Endothelial cell of umbilical vein (primary cell): ENCODE measurements at regions of chr2 and their contacts with region 1.

Region 1: DNA sequence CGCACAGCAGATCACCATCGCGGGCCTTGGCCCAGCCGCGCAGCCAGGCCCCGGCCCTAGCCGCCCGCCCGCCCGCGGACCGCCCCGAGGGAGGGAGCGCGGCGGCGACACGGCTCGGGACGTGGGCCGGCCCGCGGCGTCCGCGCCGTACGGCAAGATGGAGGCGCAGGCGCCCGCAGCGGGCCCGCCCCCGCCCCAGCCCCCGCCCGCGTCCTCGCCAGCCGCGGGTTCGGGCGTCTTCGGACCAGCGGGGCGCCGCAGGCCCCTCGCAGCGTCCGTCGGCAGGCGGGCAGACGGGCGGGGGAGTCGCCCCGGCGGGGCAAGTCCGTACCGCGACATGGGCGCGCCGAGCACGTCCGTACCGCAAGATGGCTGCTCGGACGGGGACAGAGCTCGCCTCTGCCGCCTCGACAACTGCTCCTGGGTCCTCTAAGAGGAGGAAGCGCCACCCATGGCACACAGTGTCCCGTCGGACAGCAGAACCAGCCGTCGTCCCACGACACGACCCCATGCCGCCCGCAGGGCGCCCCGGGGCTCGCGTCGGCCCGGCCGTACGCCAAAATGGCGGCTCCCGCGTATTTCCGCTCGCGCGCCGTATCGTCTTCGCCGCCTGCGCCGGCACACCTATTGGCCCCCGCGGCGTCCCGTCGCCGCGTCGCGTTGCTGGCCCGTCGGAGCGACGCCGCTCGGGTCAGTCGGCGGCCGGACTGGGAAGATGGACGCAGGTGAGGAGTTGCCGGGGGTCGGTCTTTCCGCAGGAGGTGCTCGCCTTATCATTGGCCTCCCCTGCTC is at the starts of genes ATG4B and THAP4:
- DNase-seq: peak; percentile 85
- H3K4me3 ChIP-seq: peak within 1 kb of the TSS; percentile 64 to 99 (median 95)
- H3K27ac ChIP-seq: peak within 1 kb of the TSS; percentile 92
- H3K4me1 ChIP-seq: peaks cover 12% of the 10 kb centered on the region
- H3K27me3 ChIP-seq: no peaks in the 10 kb centered on the region
- CTCF ChIP-seq: no peak
- POLR2A ChIP-seq: peak; percentile 76
- total RNA-seq, gene ATG4B: 83.6 and 85.6 TPM in 2 replicates
- total RNA-seq, gene THAP4: 47.4 and 49.0 TPM in 2 replicates

Region 2: DNA sequence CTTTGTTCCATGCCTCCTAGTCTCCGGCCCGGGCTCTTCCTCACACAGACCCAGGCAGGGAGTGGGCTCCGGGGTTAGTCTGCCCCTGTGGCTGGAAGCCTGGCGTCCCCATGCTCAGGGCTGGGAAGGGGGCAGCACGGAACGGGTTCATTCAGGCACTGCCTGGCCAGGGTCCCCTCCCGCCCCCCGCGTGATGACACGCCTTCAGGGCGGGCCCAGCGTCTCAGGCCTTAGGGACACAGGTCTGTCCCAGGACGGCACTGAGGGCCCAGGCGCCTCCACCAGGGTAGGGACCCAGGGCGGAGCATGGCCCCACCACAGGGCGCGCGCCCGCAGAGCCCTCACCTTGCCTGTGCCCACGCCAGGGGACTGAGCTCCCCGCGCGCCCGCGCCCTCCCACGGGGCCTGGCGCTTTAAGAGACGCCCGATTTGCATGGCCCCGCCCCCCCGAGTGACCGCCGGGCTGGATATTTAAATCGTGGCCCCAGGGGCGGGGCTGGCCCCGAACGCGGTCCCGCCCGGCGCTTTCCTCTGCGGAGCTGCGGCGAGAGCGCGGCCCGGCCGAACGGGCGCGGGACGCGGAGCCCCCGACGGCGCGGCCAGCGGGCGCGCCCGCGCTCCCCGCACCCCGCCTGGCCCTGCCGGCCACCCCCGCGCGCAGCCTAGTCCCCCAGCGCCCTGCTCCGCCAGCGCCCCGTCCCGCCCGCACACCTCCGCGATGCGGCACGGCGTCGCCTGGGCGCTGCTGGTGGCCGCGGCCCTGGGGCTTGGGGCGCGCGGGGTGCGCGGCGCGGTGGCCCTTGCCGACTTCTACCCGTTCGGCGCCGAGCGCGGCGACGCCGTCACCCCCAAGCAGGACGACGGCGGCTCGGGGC is 638.8 kb before region 1 on chr2 and contains the start of gene SNED1:
- CTCF ChIA-PET with region 1: no interaction called
- POLR2A ChIA-PET with region 1: no interaction called
- dilution Hi-C with region 1: no loop called
- intact Hi-C with region 1: loop called (anchors 5 kb)
- DNase-seq: peak; percentile 93
- H3K4me3 ChIP-seq: peak within 1 kb of the TSS; percentile 42 to 46 (median 42)
- H3K27ac ChIP-seq: peak within 1 kb of the TSS; percentile 80
- H3K4me1 ChIP-seq: peaks cover 12% of the 10 kb centered on the region
- H3K27me3 ChIP-seq: no peaks in the 10 kb centered on the region
- CTCF ChIP-seq: no peak
- POLR2A ChIP-seq: peak; percentile 68
- total RNA-seq, gene SNED1: 17.2 and 22.1 TPM in 2 replicates

Region 3: DNA sequence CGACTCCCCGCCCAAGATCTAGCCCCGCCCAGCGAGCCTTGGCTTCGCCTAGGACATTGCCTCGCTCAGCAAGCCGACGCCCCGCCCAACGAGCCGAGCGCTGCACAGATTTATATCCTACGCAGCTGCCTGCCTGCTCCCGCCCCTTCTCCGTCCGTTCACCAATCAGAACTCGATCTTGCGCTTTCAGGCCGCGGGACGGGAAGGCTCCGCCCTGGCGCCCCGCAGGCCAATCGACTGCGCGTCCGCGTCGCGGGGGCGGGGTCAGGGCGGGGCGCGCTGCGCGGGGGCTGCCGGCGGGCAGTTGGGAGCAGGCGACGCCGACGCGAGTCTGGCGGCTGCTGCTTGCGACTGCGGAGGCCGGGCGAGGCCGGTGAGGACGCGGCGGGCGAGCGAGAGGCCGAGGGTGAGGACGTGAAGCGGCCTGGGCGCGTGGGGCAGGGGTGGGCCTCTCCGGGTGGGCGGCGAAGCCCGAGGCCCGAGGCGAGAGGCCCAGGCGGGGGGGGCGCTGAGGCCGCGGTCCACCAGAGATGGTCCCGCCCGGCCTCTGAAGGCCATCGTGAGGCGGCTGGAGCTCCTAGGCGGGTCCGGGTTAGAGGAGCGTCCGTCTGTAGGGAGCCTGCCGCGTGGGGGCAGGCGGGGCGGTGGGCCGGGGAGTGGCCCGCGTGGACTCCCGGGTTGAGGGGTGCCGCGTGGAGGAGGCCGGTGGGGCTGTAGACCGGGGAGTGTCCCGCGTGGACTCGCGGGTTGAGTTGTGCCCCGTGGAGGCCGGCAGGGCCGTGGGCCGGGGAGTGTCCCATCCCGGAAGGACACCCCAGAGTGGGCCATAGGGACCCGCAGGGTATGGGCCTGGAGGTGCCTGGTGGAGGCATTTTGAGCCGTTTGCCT is 281.0 kb before region 1 on chr2 and contains the start of gene FARP2:
- CTCF ChIA-PET with region 1: interaction called, 3 read pairs
- POLR2A ChIA-PET with region 1: no interaction called
- dilution Hi-C with region 1: no loop called
- intact Hi-C with region 1: loop called (anchors 1 kb)
- DNase-seq: peak; percentile 99
- H3K4me3 ChIP-seq: peak within 1 kb of the TSS; percentile 48 to 91 (median 62)
- H3K27ac ChIP-seq: peak within 1 kb of the TSS; percentile 33
- H3K4me1 ChIP-seq: peaks cover 21% of the 10 kb centered on the region
- H3K27me3 ChIP-seq: no peaks in the 10 kb centered on the region
- CTCF ChIP-seq: no peak
- POLR2A ChIP-seq: peak; percentile 89
- total RNA-seq, gene FARP2: 40.6 and 45.3 TPM in 2 replicates

Region 4: DNA sequence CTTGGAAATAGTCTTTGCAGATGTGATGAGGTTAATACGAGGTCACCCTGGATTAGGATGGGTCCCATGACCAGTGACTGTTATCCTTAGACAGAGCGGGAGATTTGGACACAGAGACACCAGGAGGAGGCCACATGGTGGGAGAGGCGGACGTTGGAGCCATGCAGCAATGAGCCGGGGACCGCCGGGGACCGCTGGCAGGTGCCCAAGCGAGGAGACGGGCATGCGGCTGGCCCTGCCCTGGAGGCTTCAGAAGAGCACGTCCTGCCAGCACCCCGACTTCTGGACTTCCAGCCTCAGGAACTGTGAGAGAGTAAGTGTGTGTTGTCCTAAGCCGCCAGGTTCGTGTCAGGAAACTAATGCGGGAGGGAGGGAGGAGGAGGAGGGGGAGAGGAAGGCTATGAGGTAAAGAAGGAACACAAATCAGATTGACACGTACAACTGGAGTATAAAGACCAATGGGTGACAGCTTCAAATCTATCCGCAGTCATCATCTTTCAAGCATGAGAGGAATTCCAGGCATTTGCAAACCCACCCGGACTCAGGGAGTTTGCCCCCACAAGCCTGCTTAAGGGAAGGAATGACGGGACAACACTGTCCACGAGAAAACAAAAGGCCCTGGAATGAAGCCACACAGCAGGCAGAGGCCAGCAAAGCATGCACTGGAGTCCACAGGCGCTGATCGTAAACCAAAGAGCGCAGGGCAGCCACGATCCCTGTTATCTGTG is 90.3 kb before region 1 on chr2:
- CTCF ChIA-PET with region 1: no interaction called
- POLR2A ChIA-PET with region 1: no interaction called
- dilution Hi-C with region 1: no loop called
- intact Hi-C with region 1: loop called (anchors 1 kb)
- DNase-seq: peak; percentile 92
- H3K4me3 ChIP-seq: no peak overlapping the region
- H3K27ac ChIP-seq: peak overlapping the region; percentile 61
- H3K4me1 ChIP-seq: peaks cover 33% of the 10 kb centered on the region
- H3K27me3 ChIP-seq: no peaks in the 10 kb centered on the region
- CTCF ChIP-seq: no peak
- POLR2A ChIP-seq: peak; percentile 50

Region 5: GRCh38 chr2:241659150-241659739 is 22.0 kb after region 1 on chr2:
- CTCF ChIA-PET with region 1: interaction called, 10 read pairs
- POLR2A ChIA-PET with region 1: no interaction called
- dilution Hi-C with region 1: no loop called
- intact Hi-C with region 1: no loop called
- DNase-seq: peak; percentile 71
- H3K4me3 ChIP-seq: no peak overlapping the region
- H3K27ac ChIP-seq: no peak overlapping the region
- H3K4me1 ChIP-seq: no peaks in the 10 kb centered on the region
- H3K27me3 ChIP-seq: no peaks in the 10 kb centered on the region
- CTCF ChIP-seq: peak; percentile 60 to 70
- POLR2A ChIP-seq: no peak

Region 6: GRCh38 chr2:241692448-241692847 is 55.3 kb after region 1 on chr2:
- CTCF ChIA-PET with region 1: no interaction called
- POLR2A ChIA-PET with region 1: interaction called, 15 read pairs
- dilution Hi-C with region 1: no loop called
- intact Hi-C with region 1: loop called (anchors 2 kb)
- DNase-seq: no peak
- H3K4me3 ChIP-seq: no peak overlapping the region
- H3K27ac ChIP-seq: no peak overlapping the region
- H3K4me1 ChIP-seq: peaks cover 8% of the 10 kb centered on the region
- H3K27me3 ChIP-seq: no peaks in the 10 kb centered on the region
- CTCF ChIP-seq: no peak
- POLR2A ChIP-seq: no peak